Sigmoid colon (tissue), 7 donors: ENCODE measurements at regions of chr1 and their contacts with region 1.

Region 1: DNA sequence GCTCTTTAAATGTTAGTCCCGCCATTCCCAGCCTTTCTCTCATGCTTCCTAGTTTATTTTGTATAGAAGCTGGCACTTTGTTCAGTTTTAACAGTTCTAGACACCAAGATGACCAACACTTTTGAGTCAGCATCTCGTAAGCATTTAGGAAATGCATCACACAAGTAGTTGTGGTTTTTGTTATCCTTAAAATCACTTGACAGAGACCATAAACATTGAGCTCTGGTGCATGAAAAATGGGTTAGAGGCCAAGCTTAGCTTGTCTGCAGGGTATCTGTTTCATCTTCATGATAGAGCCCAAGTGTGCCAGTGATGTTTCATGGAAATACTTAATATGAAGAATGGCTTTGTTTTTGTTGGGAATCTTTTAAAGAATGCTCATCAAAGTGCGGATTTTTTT is 159.7 kb downstream of the DISP1 start:
- DNase-seq: no peak
- H3K4me3 ChIP-seq: no peak overlapping the region
- H3K27ac ChIP-seq: peak overlapping the region in 3 of 4 donors; percentile 64 to 77 (median 68)
- H3K4me1 ChIP-seq: peaks cover 0 to 46% (median 31%) of the 10 kb centered on the region in 4 donors
- H3K27me3 ChIP-seq: no peaks in the 10 kb centered on the region
- CTCF ChIP-seq: no peak
- EP300 ChIP-seq: peak; percentile 93 to 97 (median 96)
- POLR2A ChIP-seq: no peak

Region 2: DNA sequence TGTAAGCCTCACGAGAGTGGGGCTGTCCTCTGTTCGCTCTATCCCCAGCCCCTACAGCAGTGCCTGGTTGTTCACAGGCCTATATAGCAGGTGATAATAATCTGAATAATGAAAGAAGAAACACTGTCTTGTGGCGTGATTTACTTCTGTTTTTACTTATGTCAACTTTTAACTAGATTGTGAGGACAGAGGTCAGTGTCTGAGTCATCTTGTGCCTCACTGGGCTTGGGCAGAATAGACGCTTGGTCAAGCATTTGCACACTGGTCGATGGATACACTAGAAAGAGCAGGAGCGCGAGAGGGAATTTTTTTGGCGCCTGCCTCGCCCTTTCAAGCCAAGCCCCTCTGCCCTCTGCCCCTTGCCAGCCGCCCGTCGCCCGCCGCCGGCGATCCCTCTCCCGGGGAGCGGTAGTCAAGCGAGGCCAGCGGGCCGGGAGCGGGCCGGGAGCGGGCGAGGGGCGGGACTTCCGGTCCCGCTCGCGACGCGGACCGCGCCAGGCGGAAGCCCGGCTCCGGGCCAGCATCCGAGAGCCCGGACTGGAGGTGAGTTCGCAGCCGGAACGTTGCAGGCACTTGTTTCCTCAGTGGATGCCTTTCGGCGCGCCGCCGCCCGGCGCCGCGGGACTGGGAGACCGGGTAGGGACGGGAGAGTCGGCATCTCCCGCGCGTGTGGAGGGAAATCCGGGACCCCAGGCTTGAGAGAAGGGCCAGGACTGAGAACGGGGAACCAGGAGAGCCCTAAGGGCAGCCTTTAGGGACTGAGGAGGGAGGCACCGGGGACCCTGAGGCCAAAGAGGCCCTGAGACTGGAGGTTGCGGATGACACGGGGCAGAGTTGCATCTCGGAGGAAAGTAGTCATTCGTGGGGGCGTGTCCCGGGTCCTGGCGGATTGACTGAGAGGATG is 159.7 kb before region 1 on chr1 and contains the start of gene DISP1:
- intact Hi-C with region 1: loop called (anchors 10 kb)
- DNase-seq: peak; percentile 95
- H3K4me3 ChIP-seq: peak within 1 kb of the TSS; percentile 72 to 92 (median 90)
- H3K27ac ChIP-seq: peak within 1 kb of the TSS; percentile 89 to 99 (median 98)
- H3K4me1 ChIP-seq: peaks cover 4 to 51% (median 34%) of the 10 kb centered on the region in 4 donors
- H3K27me3 ChIP-seq: no peaks in the 10 kb centered on the region
- CTCF ChIP-seq: peak in 1 of 4 experiments; percentile 23
- EP300 ChIP-seq: peak in 1 of 4 donors; percentile 16
- POLR2A ChIP-seq: peak; percentile 65 to 84
- total RNA-seq, gene DISP1: 17.1 to 31.3 (median 23.5) TPM

Region 3: GRCh38 chr1:222935239-222935900 is 39.1 kb before region 1 on chr1:
- intact Hi-C with region 1: loop called (anchors 2 kb)
- DNase-seq: no peak
- H3K4me3 ChIP-seq: no peak overlapping the region
- H3K27ac ChIP-seq: peak overlapping the region; percentile 61 to 78 (median 67)
- H3K4me1 ChIP-seq: peaks cover 0 to 62% (median 24%) of the 10 kb centered on the region in 4 donors
- H3K27me3 ChIP-seq: no peaks in the 10 kb centered on the region
- CTCF ChIP-seq: no peak
- EP300 ChIP-seq: peak in 2 of 4 donors; percentile 46 to 76
- POLR2A ChIP-seq: no peak

Region 4: DNA sequence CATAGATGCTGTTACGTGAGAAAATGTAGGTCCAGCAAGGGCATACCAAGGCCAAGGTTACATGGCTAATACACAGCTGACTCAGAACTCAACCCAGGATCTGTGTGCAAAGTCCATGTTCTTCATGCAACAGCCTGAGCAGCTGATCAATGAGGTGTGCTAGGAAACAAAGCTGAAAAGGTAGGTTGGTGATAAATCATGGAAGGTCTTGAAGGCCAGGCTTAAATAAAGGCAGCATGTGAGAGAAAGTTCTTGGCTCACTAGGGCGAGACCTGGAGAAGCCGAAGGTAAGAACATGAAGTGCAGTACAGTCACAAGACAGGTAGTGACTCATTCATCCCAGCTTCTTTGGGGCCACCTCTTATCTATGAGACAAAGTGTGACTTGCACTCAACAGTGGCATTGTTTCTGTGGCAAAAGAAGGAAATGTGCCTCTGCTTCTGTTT is 135.1 kb after region 1 on chr1:
- intact Hi-C with region 1: loop called (anchors 10 kb)
- DNase-seq: no peak
- H3K4me3 ChIP-seq: no peak overlapping the region
- H3K27ac ChIP-seq: no peak overlapping the region
- H3K4me1 ChIP-seq: peaks cover 0 to 19% (median 12%) of the 10 kb centered on the region in 4 donors
- H3K27me3 ChIP-seq: no peaks in the 10 kb centered on the region
- CTCF ChIP-seq: no peak
- EP300 ChIP-seq: no peak
- POLR2A ChIP-seq: no peak